Breast epithelium (tissue), 4 donors: ENCODE measurements at regions of chr16 and their contacts with region 1.

Region 1: DNA sequence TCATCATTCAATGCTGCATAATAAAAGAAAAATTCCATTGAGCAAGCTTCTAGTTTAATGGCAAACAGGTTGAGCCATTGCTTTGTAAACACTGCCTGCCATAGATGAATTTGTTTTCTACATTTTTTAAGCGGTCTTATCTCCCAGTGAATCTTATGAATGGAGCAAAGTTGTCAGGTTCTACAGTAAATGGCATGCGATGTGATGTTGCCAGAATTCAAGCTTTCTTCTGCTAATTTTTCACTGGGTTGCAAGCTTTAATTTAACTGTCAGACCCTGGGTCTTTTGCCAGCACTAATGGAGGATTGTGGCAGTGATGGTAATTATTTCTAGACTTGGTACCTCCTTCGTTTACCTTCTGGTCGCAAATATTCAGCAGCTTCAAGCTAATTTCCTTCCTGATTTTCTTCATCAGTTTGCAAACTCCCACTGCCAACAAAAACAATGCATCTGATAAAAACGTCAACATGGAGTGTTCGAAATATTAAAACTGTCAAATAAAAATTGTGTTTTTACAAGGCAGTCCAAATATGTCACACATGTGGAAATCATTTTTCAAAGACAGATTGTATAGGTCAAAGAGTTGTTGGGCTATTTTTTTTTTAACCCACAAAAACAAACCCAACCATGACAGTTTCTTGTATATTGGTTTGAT is 274.2 kb upstream of the ERCC4 start:
- DNase-seq: no peak
- H3K4me3 ChIP-seq: no peak overlapping the region
- H3K27ac ChIP-seq: no peak overlapping the region
- H3K4me1 ChIP-seq: no peaks in the 10 kb centered on the region
- H3K27me3 ChIP-seq: no peaks in the 10 kb centered on the region
- CTCF ChIP-seq: no peak
- POLR2A ChIP-seq: no peak

Region 2: GRCh38 chr16:13041646-13042290 is 604.0 kb before region 1 on chr16:
- intact Hi-C with region 1: no loop called
- DNase-seq: no peak
- H3K4me3 ChIP-seq: no peak overlapping the region
- H3K27ac ChIP-seq: no peak overlapping the region
- H3K4me1 ChIP-seq: no peaks in the 10 kb centered on the region
- H3K27me3 ChIP-seq: no peaks in the 10 kb centered on the region
- CTCF ChIP-seq: no peak
- POLR2A ChIP-seq: no peak

Region 3: GRCh38 chr16:13587176-13587575 is 58.5 kb before region 1 on chr16:
- intact Hi-C with region 1: loop called (anchors 2 kb)
- DNase-seq: no peak
- H3K4me3 ChIP-seq: no peak overlapping the region
- H3K27ac ChIP-seq: no peak overlapping the region
- H3K4me1 ChIP-seq: no peaks in the 10 kb centered on the region
- H3K27me3 ChIP-seq: no peaks in the 10 kb centered on the region
- CTCF ChIP-seq: no peak
- POLR2A ChIP-seq: no peak

Region 4: DNA sequence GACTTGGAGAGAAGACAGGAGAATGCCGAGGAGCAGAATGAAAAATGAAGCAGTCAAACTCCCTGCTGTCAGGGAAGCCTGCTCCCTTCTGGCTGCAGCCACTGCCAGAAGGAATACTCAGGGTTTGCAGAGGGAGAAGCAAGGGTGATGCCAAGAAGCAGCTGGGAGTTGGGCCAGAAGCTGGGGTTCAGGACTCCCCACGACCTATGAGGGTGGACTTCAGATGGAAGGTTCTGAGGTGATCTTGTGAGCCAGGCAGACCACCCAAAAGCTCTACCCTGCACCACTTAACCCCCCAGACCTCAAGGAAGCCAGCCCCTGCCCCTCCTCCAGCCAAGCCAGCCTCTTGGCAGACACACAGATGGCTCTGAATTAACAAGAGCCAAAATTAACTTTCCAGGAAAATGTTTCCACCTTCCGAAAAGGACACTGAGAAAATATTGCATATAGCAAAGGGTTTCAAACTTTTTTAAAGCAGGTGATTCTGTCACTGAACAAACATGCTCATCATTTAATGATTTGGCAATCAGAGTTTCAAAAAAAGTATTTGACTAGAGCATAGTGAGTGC is 148.2 kb after region 1 on chr16:
- intact Hi-C with region 1: loop called (anchors 5 kb)
- DNase-seq: no peak
- H3K4me3 ChIP-seq: no peak overlapping the region
- H3K27ac ChIP-seq: no peak overlapping the region
- H3K4me1 ChIP-seq: no peaks in the 10 kb centered on the region
- H3K27me3 ChIP-seq: peaks cover 0 to 4% of the 10 kb centered on the region in 2 donors
- CTCF ChIP-seq: no peak
- POLR2A ChIP-seq: no peak